ENCODE measurements at regions of chr17 and their contacts with region 1.

Region 1: DNA sequence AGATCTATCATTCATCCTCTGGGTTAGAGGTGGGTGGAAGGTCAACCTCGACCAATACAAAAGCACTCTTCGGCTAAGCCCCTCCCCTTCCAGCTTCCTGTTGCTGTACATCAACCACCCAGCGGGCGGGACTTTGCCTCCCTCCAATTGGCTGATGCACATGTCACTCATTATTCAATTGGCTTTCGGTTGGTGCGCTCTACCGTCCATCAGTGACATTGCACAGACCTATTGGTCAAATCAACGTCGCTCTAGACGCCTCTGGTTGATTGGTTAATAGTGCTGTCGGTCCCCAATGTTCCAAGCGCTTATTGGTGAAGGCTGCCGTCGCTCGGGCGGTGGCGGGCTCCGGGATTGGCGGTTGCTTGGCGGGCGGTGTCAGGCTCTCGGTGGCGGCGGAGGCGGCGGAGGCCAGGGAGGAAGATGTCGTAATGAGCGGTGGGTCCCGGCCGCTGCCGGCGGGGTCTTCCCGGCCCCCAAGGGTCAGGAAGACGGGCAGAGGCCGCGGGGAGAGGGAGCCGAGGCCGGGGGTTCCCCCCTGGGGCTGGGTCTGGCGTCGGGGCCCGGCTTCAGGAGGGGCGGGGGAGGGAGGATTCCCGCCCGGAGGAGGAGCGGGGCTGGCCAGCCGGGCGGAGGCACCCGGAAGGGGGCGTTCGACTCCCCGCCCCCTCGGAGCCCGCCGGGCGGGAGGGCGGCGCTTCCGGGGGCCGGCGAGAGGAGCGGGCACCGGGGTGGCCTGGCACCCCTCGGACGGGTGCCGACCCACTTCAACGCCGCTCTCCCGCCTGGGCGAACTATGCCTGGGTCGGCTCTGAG is at the start of gene SP2:
- DNase-seq: peak; percentile 100
- H3K4me3 Mint-ChIP-seq: peak within 1 kb of the TSS; percentile 97
- H3K27ac Mint-ChIP-seq: peak within 1 kb of the TSS; percentile 100
- H3K4me1 Mint-ChIP-seq: peaks cover 26% of the 10 kb centered on the region
- H3K27me3 Mint-ChIP-seq: no peaks in the 10 kb centered on the region
- CTCF ChIP-seq: no peak
- total RNA-seq, gene SP2: 11.9 and 15.1 TPM in 2 replicates

Region 2: GRCh38 chr17:47831003-47831933 is 64.8 kb before region 1 on chr17 and contains the starts of genes LRRC46 and MRPL10:
- CTCF ChIA-PET with region 1: no interaction called
- POLR2A ChIA-PET with region 1: interaction called, 38 read pairs
- intact Hi-C with region 1: no loop called
- DNase-seq: peak; percentile 90
- H3K4me3 Mint-ChIP-seq: peak within 1 kb of the TSS; percentile 83
- H3K27ac Mint-ChIP-seq: peak within 1 kb of the TSS; percentile 47
- H3K4me1 Mint-ChIP-seq: peaks cover 10% of the 10 kb centered on the region
- H3K27me3 Mint-ChIP-seq: no peaks in the 10 kb centered on the region
- CTCF ChIP-seq: peak; percentile 40
- total RNA-seq, gene LRRC46: 1.2 and 1.4 TPM in 2 replicates
- total RNA-seq, gene MRPL10: 43.2 and 49.3 TPM in 2 replicates

Region 3: GRCh38 chr17:47850692-47851573 is 45.1 kb before region 1 on chr17 and contains the start of gene SP6:
- CTCF ChIA-PET with region 1: interaction called, 523 read pairs
- POLR2A ChIA-PET with region 1: interaction called, 178 read pairs
- intact Hi-C with region 1: no loop called
- DNase-seq: peak; percentile 87
- H3K4me3 Mint-ChIP-seq: peak within 1 kb of the TSS; percentile 82
- H3K27ac Mint-ChIP-seq: peak within 1 kb of the TSS; percentile 78
- H3K4me1 Mint-ChIP-seq: peaks cover 15% of the 10 kb centered on the region
- H3K27me3 Mint-ChIP-seq: peaks cover 42% of the 10 kb centered on the region
- CTCF ChIP-seq: peak; percentile 15
- total RNA-seq, gene SP6: 1.2 and 1.5 TPM in 2 replicates

Region 4: DNA sequence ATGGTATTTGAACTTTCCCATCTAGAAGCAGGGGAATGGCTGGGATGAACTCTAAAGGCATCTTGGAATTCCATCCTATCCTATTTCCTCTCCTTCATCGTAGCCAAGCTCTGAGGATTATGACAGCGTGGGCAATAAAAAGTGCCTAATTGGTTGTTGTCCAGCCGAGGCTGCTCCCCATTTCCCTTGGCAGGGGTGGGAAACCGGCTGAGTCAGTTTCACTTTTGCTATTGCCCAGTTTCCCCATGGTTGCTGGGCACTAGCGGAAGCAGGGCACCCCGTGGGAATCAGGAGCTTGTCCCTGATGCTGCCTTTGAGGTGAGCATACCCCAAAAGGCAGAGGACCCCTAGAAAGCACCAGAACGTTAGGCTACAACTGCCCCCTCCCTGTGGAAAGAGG is 13.8 kb before region 1 on chr17:
- CTCF ChIA-PET with region 1: interaction called, 3 read pairs
- POLR2A ChIA-PET with region 1: interaction called, 16 read pairs
- intact Hi-C with region 1: no loop called
- DNase-seq: peak; percentile 9
- H3K4me3 Mint-ChIP-seq: no peak overlapping the region
- H3K27ac Mint-ChIP-seq: no peak overlapping the region
- H3K4me1 Mint-ChIP-seq: no peaks in the 10 kb centered on the region
- H3K27me3 Mint-ChIP-seq: peaks cover 20% of the 10 kb centered on the region
- CTCF ChIP-seq: no peak

Region 5: DNA sequence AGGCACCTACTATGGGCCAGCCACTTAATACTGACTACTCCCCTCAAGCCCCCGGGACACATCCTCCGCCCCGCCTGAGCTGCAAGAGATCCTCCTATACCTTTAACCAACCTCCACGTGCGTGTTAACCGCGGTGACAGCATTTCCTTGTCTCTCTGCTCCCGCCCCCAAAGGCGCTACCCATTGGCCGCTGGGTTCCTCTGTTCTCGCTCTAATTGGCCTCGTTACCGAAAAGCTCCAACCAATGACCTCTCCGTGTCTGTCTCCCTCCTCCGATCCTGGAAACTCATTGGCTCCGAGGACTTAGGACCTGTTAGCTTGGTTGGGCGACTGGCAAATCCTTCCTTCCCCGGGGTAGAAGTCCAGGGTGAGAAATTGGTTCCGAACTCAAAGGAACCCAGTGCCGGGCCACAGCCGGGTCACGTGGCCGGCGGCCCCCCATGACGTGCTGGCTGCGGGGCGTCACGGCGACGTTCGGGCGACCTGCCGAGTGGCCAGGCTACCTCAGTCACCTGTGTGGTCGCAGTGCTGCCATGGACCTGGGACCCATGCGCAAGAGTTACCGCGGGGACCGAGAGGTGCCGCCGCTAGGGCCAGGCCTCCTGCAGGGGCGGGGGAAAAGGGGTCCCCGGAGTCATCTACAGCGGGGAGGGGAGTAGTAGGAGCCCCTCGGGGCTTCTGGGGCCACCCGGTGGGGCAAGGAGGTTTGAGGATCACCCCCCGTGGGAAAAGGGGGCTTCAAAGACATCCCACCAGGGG is 45.4 kb after region 1 on chr17 and contains the start of gene PNPO:
- CTCF ChIA-PET with region 1: interaction called, 17 read pairs
- POLR2A ChIA-PET with region 1: interaction called, 117 read pairs
- intact Hi-C with region 1: loop called (anchors 2 kb)
- DNase-seq: peak; percentile 99
- H3K4me3 Mint-ChIP-seq: peak within 1 kb of the TSS; percentile 82
- H3K27ac Mint-ChIP-seq: peak within 1 kb of the TSS; percentile 88
- H3K4me1 Mint-ChIP-seq: peaks cover 42% of the 10 kb centered on the region
- H3K27me3 Mint-ChIP-seq: no peaks in the 10 kb centered on the region
- CTCF ChIP-seq: no peak
- total RNA-seq, gene PNPO: 56.8 and 58.4 TPM in 2 replicates

Region 6: DNA sequence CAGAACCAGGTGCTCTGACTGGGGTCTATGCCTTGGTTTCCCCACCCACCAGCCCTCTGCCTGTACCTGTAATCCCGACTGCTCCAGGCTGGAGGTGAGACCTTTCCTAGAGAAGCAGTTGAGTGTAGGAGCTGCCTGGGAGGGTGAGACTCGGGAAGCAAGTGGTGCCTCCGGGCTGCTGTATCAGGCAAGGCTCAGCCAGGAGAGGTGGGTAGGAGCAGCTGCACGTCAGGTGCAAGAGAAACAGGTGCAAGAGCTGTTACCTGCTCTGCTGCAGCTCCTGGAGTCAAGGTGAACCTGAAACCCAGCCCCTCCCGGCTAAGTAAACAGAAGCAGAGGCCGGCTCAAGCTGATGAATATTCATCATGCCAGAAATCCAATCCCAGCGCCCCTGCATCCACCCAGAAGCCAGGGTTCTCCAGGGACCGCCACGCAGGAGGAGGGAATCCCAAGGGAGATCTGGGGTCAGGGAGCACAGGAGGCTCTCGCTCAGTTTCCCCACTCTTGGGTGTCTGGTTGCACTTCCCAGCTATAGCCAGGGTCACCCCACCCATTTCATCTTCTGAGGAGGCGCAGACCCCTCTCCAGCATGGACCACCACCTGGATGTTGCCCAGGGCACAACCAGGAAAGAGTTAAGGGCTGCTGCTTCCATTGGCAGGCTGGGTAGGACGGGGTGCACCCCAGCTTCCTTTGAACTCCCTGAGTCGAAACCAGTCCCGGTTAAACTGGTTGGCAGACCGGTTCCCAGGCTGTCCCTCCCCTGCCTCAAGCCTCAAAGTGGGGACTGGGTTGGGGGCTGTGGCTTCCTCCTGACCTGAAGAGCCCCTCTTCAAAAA is 61.7 kb after region 1 on chr17 and contains the start of gene PRR15L:
- CTCF ChIA-PET with region 1: interaction called, 3 read pairs
- POLR2A ChIA-PET with region 1: interaction called, 14 read pairs
- intact Hi-C with region 1: no loop called
- DNase-seq: peak; percentile 59
- H3K4me3 Mint-ChIP-seq: peak within 1 kb of the TSS; percentile 41
- H3K27ac Mint-ChIP-seq: no peak within 1 kb of the TSS
- H3K4me1 Mint-ChIP-seq: peaks cover 30% of the 10 kb centered on the region
- H3K27me3 Mint-ChIP-seq: no peaks in the 10 kb centered on the region
- CTCF ChIP-seq: no peak
- total RNA-seq, gene PRR15L: not detected in 2 replicates

Region 7: DNA sequence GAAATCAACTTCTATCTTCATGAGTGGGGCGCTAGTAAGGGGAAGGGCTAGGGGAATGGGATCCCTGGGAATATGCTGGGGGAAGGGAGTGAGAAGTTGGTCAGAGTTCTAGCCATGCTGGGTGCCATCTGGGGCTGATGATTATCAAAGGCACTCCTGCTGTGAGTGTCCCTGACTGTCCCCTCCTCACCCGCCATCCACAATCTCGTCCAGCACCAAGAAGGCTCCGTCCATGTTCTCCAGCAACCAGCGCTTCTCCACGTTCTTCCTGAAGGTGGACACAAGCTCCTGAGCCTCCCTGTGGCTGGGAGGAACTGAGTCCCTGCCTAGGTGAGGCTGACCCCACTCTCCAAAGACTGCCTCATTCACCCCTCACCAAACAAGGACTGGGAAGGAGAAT is 135.9 kb after region 1 on chr17:
- CTCF ChIA-PET with region 1: no interaction called
- POLR2A ChIA-PET with region 1: no interaction called
- intact Hi-C with region 1: no loop called
- DNase-seq: no peak
- H3K4me3 Mint-ChIP-seq: no peak overlapping the region
- H3K27ac Mint-ChIP-seq: no peak overlapping the region
- H3K4me1 Mint-ChIP-seq: peaks cover 15% of the 10 kb centered on the region
- H3K27me3 Mint-ChIP-seq: no peaks in the 10 kb centered on the region
- CTCF ChIP-seq: no peak

Region 8: DNA sequence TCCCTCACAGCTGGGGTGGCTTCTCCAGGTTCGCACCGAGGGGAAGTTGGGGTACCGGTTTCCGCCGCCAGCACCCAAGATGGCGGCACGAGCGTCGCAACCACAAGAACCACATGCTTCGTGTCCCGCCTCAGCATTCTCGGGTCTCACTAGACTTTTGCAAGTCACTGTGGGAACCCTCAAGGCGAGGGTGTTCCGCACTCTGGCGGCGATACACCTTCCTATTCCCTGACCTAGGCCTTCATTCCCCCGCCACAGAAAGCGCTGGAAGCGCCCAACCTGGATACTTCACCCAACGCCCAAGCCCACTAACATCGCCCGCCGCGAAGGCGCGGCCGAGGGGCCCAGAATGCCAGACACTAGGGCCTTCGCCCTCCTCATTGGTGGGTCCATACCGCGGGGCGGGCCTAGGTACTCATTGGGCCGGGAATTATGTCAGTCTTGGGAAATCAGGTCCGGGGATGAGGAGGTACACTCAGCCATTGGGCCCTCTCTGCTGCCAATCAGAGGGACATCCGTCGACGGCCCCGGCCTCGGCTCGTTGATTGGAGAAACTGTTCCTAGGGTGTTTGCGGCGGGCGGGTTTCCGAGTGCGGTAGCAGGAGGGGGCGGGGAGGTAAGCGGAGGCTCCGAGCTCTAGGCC is 151.8 kb after region 1 on chr17 and contains the start of gene NFE2L1:
- CTCF ChIA-PET with region 1: no interaction called
- POLR2A ChIA-PET with region 1: interaction called, 23 read pairs
- intact Hi-C with region 1: no loop called
- DNase-seq: peak; percentile 100
- H3K4me3 Mint-ChIP-seq: peak within 1 kb of the TSS; percentile 91
- H3K27ac Mint-ChIP-seq: peak within 1 kb of the TSS; percentile 100
- H3K4me1 Mint-ChIP-seq: peaks cover 47% of the 10 kb centered on the region
- H3K27me3 Mint-ChIP-seq: no peaks in the 10 kb centered on the region
- CTCF ChIP-seq: no peak
- total RNA-seq, gene NFE2L1: 235 and 315 TPM in 2 replicates

Region 9: DNA sequence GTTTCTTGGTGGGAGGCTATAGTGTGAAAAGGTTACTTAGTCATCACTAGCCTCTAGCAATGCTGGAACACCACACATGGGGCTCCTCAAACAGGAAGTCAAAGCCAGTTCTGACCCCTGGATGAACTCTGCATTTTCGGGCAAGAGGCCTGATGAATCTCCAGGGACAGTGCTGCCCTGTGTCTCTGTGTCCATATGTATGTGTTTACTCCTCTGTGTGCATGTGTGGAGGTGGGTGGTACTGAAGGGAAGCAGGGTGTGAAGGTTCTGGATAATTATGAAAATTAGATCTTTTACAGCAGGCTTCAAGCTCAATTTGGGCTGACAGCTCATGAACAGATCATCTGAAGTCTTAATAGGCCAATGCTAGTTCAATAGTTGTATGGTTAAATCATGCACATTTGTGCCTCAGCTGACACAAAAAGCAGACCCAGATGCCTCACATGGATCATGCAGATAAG is 345.1 kb after region 1 on chr17:
- CTCF ChIA-PET with region 1: no interaction called
- POLR2A ChIA-PET with region 1: no interaction called
- intact Hi-C with region 1: no loop called
- DNase-seq: peak; percentile 65
- H3K4me3 Mint-ChIP-seq: no peak overlapping the region
- H3K27ac Mint-ChIP-seq: no peak overlapping the region
- H3K4me1 Mint-ChIP-seq: peaks cover 13% of the 10 kb centered on the region
- H3K27me3 Mint-ChIP-seq: no peaks in the 10 kb centered on the region
- CTCF ChIP-seq: no peak